Thyroid gland (tissue), 4 donors: ENCODE measurements at regions of chr10 and their contacts with region 1.

Region 1: DNA sequence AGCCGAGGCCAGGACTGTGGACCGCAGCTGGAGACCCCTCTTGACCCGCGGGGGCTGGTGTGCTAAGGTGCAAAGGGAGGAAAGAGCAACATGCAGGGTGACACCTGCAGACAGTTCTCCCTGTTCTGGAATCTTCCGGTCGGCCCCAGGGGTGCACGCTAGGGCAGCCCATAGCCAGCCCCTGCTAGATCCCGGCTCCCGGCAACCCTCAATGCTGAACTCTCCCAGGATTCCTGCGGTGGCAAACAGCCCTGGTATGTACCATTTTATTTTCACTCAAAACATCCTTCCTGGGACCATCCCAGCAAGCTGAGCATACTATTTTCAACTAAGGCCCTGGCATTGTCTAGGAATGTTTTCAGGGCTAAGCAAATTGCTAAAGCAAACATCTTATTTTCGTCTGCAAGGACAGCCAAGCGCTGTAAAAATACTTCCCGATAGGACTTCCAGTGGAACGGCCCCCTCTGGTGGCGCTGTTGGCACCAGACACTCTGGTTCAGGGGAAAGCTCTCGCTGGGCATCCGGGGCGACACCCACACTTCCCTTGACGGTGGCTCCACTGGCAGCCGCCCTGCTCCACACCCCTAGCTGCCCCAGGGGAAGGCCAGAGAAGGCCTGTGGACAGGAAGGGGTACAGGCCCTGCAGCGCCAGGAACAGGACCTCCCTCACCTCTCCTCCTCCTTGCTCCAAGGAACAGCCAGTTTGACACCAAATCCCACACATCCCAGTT is 99.4 kb downstream of the CTBP2 start:
- DNase-seq: peak; percentile 91 to 93
- H3K4me3 ChIP-seq: no peak overlapping the region
- H3K27ac ChIP-seq: peak overlapping the region; percentile 64 to 94 (median 88)
- H3K4me1 ChIP-seq: peaks cover 93 to 100% of the 10 kb centered on the region in 2 donors
- H3K27me3 ChIP-seq: no peaks in the 10 kb centered on the region
- CTCF ChIP-seq: peak; percentile 64 to 91 (median 84)
- POLR2A ChIP-seq: peak in 1 of 2 donors; percentile 27

Region 2: DNA sequence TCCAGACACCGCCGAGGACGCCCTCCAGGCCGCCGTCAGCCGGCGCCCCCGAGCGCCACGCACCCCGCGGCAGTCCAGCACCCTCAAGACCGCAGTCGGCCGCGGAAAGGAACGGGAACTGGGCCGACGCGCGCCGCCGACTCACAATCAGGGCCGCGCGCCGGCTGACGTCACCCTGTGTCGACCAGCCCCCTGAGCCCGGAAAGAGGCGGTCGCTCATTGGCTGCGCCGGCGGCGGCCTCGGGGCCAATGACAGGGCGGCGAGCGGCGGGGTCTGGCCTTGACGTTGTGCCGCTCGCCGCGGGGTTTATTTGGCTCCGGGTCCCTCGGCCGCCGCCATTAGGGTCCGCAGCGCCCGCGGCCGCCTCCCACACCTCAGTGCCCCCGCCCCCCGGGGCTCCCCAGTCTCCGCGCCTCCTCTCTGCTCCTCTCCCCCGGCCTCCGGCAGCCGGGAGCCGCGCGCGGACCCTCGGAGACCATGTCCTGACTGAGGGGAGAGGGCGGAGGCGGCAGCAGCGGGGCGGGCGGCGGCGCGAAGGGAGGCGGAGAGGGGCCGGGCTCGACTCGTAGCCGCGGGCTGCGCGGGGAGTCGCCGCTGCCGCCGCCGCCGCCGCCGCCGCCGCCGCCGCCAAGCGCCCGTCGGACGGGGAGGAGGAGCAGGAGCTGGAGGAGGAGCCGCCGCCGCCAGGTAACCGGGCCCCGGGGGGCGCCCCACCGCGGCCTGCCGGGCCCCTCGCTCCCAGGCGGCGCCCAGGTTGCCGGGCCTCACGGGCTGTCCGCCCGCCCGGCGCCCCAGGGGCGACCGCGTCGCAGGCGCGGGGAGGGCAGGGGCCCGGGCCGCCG is 144.2 kb before region 1 on chr10:
- intact Hi-C with region 1: loop called (anchors 10 kb)
- DNase-seq: peak; percentile 99
- H3K4me3 ChIP-seq: peak overlapping the region; percentile 56 to 76 (median 69)
- H3K27ac ChIP-seq: peak overlapping the region; percentile 96 to 98 (median 97)
- H3K4me1 ChIP-seq: peaks cover 13 to 21% of the 10 kb centered on the region in 2 donors
- H3K27me3 ChIP-seq: no peaks in the 10 kb centered on the region
- CTCF ChIP-seq: no peak
- POLR2A ChIP-seq: peak in 1 of 2 donors; percentile 97

Region 3: DNA sequence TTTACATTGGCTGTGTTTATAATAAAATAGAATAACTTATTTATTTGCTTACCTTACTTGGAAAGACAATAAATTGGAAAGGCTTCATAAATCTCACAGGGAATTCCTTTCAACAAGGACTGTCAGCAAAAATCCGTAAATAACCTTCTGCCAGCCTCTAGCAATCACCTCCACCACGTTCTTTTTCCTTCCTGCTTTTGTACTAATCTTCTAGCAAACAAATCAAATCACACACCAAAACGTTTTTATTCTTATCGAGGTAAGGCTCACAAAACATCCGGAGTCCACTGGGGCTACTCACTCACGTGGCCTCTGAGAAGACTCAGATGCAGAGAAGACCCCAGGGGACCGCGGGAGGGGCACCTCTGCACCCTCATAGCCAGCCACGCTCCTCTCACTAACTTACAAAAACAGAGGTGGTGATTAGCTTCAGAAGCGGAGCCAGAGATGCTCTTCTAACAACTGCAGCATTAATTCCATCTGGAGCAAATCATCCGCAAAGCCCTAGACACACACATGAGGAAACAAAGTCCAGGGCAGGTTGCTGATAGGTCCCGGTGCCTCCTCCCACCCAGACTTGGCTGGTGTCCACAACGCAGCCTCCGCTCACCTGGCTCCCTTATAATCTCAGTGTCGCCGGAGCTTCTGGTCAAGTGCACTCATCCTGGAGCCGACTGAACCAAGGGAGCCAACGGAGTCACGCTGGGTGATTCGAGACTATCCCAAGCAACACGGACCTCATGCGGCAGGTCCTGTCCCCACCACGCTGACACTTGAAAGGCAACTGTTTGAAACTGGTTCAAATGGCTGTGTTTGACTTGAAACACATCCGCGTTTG is 76.8 kb after region 1 on chr10:
- intact Hi-C with region 1: loop called (anchors 5 kb)
- DNase-seq: peak; percentile 99
- H3K4me3 ChIP-seq: no peak overlapping the region
- H3K27ac ChIP-seq: peak overlapping the region; percentile 61 to 79 (median 69)
- H3K4me1 ChIP-seq: peaks cover 63 to 84% of the 10 kb centered on the region in 2 donors
- H3K27me3 ChIP-seq: no peaks in the 10 kb centered on the region
- CTCF ChIP-seq: peak in 3 of 6 experiments; percentile 9 to 35 (median 33)
- POLR2A ChIP-seq: peak in 1 of 2 donors; percentile 57

Region 4: DNA sequence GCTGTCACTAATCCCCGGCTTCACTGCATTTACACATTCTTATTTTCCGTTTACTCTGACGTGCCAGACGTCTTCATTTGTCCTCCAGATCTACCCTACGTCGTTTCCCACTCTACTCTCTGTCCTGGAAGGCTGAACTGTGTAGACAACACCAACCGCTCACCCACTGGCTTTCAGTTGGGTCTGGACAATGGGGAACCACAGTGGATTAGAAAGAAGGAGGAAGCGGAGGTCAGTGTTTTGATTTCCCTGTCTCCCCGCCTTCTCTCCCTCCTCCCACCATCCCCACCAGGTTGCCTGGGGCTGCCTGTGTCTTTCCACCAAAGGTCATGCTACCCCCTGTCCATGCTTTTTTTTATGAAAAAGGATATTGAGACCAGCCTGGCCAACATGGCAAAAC is 113.4 kb after region 1 on chr10:
- intact Hi-C with region 1: no loop called
- DNase-seq: no peak
- H3K4me3 ChIP-seq: no peak overlapping the region
- H3K27ac ChIP-seq: no peak overlapping the region
- H3K4me1 ChIP-seq: no peaks in the 10 kb centered on the region
- H3K27me3 ChIP-seq: no peaks in the 10 kb centered on the region
- CTCF ChIP-seq: no peak
- POLR2A ChIP-seq: no peak